Gastrocnemius medialis (tissue), 4 donors: ENCODE measurements at regions of chr3 and their contacts with region 1.

Region 1: GRCh38 chr3:45499529-45499928 is 95.0 kb upstream of the LIMD1 start:
- DNase-seq: no peak
- ATAC-seq: no peak
- H3K4me3 ChIP-seq: no peak overlapping the region
- H3K27ac ChIP-seq: no peak overlapping the region
- H3K4me1 ChIP-seq: peaks cover 31% of the 10 kb centered on the region in 2 donors
- H3K27me3 ChIP-seq: no peaks in the 10 kb centered on the region
- CTCF ChIP-seq: peak in 4 of 5 experiments; percentile 18 to 56 (median 42)
- POLR2A ChIP-seq: no peak

Region 2: DNA sequence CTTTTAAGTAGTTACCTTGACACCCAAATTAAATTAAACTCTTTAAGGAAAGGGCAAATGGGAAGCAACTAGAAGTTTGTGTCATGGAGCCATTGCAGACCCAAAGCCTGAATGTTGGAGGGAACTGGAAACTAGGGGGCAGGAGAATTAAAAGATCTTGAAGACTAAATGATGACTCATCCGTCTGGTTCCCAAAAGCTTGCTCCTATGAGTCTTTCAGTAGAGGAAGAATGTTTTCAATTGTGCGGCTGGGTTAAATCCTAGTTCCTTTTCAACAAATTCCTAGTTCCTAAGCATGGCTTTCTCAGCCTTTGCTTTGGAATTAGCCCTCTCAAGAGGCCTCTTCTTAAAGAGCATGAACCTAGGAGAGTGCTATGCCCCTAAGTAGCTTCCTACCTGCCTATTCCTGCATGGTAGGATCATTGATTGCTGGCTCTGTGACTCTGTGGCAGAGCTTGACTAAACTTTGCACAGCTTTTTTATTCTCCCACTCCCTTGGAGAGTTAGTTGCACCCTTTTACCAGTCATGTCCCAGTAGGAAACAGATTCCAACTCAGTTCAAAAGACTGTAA is 455.7 kb before region 1 on chr3:
- in situ Hi-C with region 1: loop called (anchors 5 to 25 kb)
- intact Hi-C with region 1: loop called (anchors 5 kb)
- DNase-seq: no peak
- ATAC-seq: no peak
- H3K4me3 ChIP-seq: no peak overlapping the region
- H3K27ac ChIP-seq: no peak overlapping the region
- H3K4me1 ChIP-seq: peaks cover 0 to 18% of the 10 kb centered on the region in 2 donors
- H3K27me3 ChIP-seq: no peaks in the 10 kb centered on the region
- CTCF ChIP-seq: no peak
- POLR2A ChIP-seq: no peak

Region 3: GRCh38 chr3:45055411-45056143 is 444.0 kb before region 1 on chr3:
- in situ Hi-C with region 1: no loop called
- intact Hi-C with region 1: loop called (anchors 5 kb)
- DNase-seq: no peak
- ATAC-seq: peak in 1 of 2 donors; percentile 49
- H3K4me3 ChIP-seq: no peak overlapping the region
- H3K27ac ChIP-seq: peak overlapping the region in 3 of 4 donors; percentile 31 to 86 (median 74)
- H3K4me1 ChIP-seq: peaks cover 28 to 37% of the 10 kb centered on the region in 2 donors
- H3K27me3 ChIP-seq: no peaks in the 10 kb centered on the region
- CTCF ChIP-seq: peak in 2 of 5 experiments; percentile 25 to 39
- POLR2A ChIP-seq: no peak

Region 4: GRCh38 chr3:45123030-45123429 is 376.5 kb before region 1 on chr3:
- in situ Hi-C with region 1: no loop called
- intact Hi-C with region 1: loop called (anchors 10 kb)
- DNase-seq: peak; percentile 80 to 81
- ATAC-seq: peak; percentile 57 to 67
- H3K4me3 ChIP-seq: no peak overlapping the region
- H3K27ac ChIP-seq: peak overlapping the region; percentile 84 to 98 (median 88)
- H3K4me1 ChIP-seq: peaks cover 52 to 79% of the 10 kb centered on the region in 2 donors
- H3K27me3 ChIP-seq: no peaks in the 10 kb centered on the region
- CTCF ChIP-seq: no peak
- POLR2A ChIP-seq: peak in 1 of 2 donors; percentile 53

Region 5: DNA sequence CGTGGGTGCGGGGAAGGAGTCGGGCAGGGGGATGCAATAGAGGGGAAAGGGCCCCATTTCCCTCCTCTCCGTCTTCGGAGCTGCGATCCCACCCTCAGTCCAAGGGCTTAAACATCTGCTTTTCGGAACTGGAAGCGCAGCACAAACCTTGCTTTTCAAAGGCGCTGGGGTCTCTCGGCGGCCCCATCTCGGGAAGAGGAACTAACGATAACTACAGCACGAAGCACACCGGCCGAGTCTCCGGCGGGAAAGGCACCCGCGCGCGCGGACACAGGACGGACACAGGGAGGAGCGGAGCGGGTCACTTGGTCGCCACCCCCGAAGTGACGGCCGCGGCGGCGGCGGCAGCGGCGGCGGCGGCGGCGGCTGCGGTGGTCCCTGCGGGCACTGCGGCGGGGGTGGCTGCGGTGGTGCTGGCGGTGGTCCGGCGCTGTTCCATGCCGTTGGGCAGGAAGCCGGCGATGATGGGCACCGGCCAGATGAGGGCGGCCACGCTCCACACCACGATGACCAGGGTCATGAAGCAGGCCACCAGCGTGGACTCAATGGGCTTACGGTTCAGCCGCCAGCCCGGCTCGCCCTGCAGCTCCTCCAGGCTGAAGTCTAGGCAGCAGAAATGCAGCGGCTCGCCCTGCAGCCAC is 274.6 kb before region 1 on chr3:
- in situ Hi-C with region 1: loop called (anchors 10 to 25 kb)
- intact Hi-C with region 1: loop called (anchors 1 kb)
- DNase-seq: peak; percentile 59 to 69
- ATAC-seq: peak; percentile 79 to 83
- H3K4me3 ChIP-seq: peak overlapping the region; percentile 36 to 60 (median 49)
- H3K27ac ChIP-seq: no peak overlapping the region
- H3K4me1 ChIP-seq: peaks cover 3 to 11% of the 10 kb centered on the region in 2 donors
- H3K27me3 ChIP-seq: peaks cover 0 to 4% (median 0%) of the 10 kb centered on the region in 3 donors
- CTCF ChIP-seq: peak; percentile 40 to 70 (median 51)
- POLR2A ChIP-seq: no peak

Region 6: GRCh38 chr3:45852828-45853227 is 353.3 kb after region 1 on chr3:
- in situ Hi-C with region 1: no loop called
- intact Hi-C with region 1: no loop called
- DNase-seq: no peak
- ATAC-seq: no peak
- H3K4me3 ChIP-seq: no peak overlapping the region
- H3K27ac ChIP-seq: no peak overlapping the region
- H3K4me1 ChIP-seq: peaks cover 0 to 13% of the 10 kb centered on the region in 2 donors
- H3K27me3 ChIP-seq: no peaks in the 10 kb centered on the region
- CTCF ChIP-seq: no peak
- POLR2A ChIP-seq: no peak